GM12878 (cell line): ENCODE measurements at regions of chr10 and their contacts with region 1.

Region 1: GRCh38 chr10:62779487-62780248 is 24.9 kb upstream of the ADO start:
- DNase-seq: peak; percentile 84
- ATAC-seq: peak; percentile 96
- H3K4me3 ChIP-seq: no peak overlapping the region
- H3K27ac ChIP-seq: peak overlapping the region; percentile 75; the same call in 1 of the 2 replicates
- H3K4me1 ChIP-seq: peaks cover 23% of the 10 kb centered on the region
- H3K27me3 ChIP-seq: no peaks in the 10 kb centered on the region
- CTCF ChIP-seq: no peak
- EP300 ChIP-seq: peak; percentile 83 to 84
- POLR2A ChIP-seq: no peak
- RAD21 ChIP-seq: no peak

Region 2: DNA sequence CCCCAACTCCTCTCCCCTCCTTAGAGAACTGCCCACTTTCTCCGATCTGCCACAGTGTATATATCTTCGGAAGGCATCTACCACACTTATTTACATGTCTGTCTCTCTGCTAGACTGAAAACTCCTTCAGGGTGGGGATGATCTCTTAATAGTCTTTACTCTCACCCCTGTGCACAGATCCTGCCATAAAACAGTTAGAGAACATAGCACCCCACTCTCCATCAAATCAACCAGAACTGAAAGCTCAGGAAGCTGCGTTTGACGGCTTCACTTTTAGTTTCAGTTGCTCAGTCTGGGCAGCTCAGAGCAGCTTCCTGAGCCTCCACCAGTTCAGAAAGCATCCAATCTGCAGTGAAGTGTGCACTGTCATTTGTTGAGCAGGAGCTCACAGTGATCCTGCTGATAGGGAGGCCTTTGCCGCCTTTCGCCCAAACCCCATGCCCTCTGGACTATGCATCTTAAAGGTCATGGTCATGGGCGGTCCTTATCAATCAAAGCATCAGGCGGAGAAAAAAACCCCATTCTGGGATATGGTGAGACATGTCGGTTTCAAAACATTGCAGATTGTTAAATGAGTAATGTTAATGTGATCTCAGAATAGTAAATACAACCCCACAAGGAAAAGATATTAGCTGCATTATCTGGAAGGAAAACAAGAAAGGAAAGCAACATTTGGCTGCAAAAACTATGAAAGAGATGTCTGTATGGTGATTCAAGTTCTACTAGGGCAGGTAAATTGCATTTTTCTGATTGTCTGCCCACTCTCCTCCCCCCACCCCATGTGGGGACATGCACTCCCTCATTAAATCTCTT is 142.2 kb before region 1 on chr10:
- CTCF ChIA-PET with region 1: interaction called, 6 read pairs
- POLR2A ChIA-PET with region 1: no interaction called
- RAD21 ChIA-PET with region 1: interaction called, 23 read pairs
- SMC1A ChIA-PET with region 1: interaction called, 24 read pairs
- in situ Hi-C with region 1: no loop called
- intact Hi-C with region 1: no loop called
- DNase-seq: peak; percentile 81
- ATAC-seq: peak; percentile 79
- H3K4me3 ChIP-seq: peak overlapping the region; percentile 12
- H3K27ac ChIP-seq: peak overlapping the region; percentile 95
- H3K4me1 ChIP-seq: peaks cover 85% of the 10 kb centered on the region
- H3K27me3 ChIP-seq: no peaks in the 10 kb centered on the region
- CTCF ChIP-seq: no peak
- EP300 ChIP-seq: peak; percentile 23 to 60; a peak in 3 of 4 replicates
- POLR2A ChIP-seq: peak; percentile 61
- RAD21 ChIP-seq: no peak

Region 3: DNA sequence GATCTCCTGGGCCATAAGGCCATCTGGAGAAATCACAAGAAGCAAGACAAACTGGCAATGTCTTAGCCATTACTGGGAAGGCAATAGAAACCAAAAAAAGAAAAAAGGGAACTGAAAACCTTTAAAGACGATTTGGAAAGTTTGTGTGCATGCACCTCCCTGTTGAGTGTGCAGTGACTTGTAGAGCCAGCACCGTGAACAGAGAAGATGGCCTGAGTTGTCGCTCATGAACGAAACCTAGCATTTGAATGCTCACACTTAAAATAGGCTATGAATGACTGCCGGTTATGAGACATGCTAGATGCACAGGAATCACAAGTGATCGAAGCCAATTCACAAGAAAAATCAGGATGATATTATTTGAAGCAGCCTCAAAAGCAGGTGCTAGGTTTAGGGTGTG is 126.4 kb before region 1 on chr10:
- CTCF ChIA-PET with region 1: interaction called, 5 read pairs
- POLR2A ChIA-PET with region 1: no interaction called
- RAD21 ChIA-PET with region 1: interaction called, 19 read pairs
- SMC1A ChIA-PET with region 1: interaction called, 25 read pairs
- in situ Hi-C with region 1: no loop called
- intact Hi-C with region 1: loop called (anchors 1 kb)
- DNase-seq: peak; percentile 97
- ATAC-seq: peak; percentile 85
- H3K4me3 ChIP-seq: no peak overlapping the region
- H3K27ac ChIP-seq: peak overlapping the region; percentile 90
- H3K4me1 ChIP-seq: peaks cover 50% of the 10 kb centered on the region
- H3K27me3 ChIP-seq: no peaks in the 10 kb centered on the region
- CTCF ChIP-seq: no peak
- EP300 ChIP-seq: peak; percentile 99
- POLR2A ChIP-seq: no peak
- RAD21 ChIP-seq: peak; percentile 45; the same call in 1 of the 2 replicates

Region 4: DNA sequence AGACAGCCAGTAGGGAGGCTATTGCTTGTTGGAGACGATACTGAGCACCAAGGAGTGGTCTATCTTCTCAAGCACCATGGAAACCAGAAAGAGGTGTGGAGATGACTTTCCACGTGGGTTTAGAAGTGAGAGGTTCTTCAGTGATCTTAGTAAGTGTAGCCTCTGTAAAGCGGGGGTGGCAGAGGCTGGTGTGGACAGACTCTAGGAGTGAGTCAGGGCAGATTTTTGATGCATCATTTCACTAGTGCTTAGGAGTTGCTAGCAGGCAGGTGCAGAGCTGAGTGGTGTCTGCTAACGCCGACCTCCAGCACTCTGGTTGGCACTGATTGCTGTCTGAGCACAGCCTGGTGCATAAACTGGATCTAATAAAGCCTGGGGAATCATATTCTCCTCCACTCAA is 53.5 kb before region 1 on chr10:
- CTCF ChIA-PET with region 1: interaction called, 6 read pairs
- POLR2A ChIA-PET with region 1: interaction called, 20 read pairs
- RAD21 ChIA-PET with region 1: interaction called, 101 read pairs
- SMC1A ChIA-PET with region 1: interaction called, 124 read pairs
- in situ Hi-C with region 1: no loop called
- intact Hi-C with region 1: no loop called
- DNase-seq: no peak
- ATAC-seq: peak; percentile 97
- H3K4me3 ChIP-seq: no peak overlapping the region
- H3K27ac ChIP-seq: no peak overlapping the region
- H3K4me1 ChIP-seq: no peaks in the 10 kb centered on the region
- H3K27me3 ChIP-seq: no peaks in the 10 kb centered on the region
- CTCF ChIP-seq: no peak
- EP300 ChIP-seq: peak; percentile 63 to 69; a peak in 3 of 4 replicates
- POLR2A ChIP-seq: peak; percentile 36; the same call in 1 of the 2 replicates
- RAD21 ChIP-seq: peak; percentile 6; the same call in 1 of the 2 replicates

Region 5: DNA sequence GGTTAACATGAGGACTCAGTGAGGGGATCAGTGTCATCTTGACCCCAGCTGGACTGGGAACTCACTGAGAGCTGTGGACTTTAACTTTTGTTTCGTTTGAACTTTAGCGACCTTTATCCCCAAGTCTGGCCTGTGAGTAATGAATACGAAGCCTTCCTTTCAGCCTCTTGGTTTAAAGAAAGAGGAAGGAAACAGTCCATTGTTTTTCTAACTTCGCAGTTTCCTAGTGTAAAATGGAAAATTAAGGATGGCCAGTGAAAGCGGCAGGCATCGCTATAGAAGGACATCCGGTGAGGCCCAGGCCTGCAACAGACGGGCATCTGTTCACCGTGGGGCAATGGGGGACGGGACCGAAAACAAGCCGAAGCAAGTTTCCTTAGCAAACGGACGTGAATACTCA is 19.3 kb before region 1 on chr10:
- CTCF ChIA-PET with region 1: interaction called, 6 read pairs
- POLR2A ChIA-PET with region 1: interaction called, 10 read pairs
- RAD21 ChIA-PET with region 1: interaction called, 23 read pairs
- SMC1A ChIA-PET with region 1: interaction called, 15 read pairs
- in situ Hi-C with region 1: no loop called
- intact Hi-C with region 1: no loop called
- DNase-seq: no peak
- ATAC-seq: no peak
- H3K4me3 ChIP-seq: no peak overlapping the region
- H3K27ac ChIP-seq: no peak overlapping the region
- H3K4me1 ChIP-seq: peaks cover 10% of the 10 kb centered on the region
- H3K27me3 ChIP-seq: no peaks in the 10 kb centered on the region
- CTCF ChIP-seq: no peak
- EP300 ChIP-seq: no peak
- POLR2A ChIP-seq: no peak
- RAD21 ChIP-seq: no peak

Region 6: GRCh38 chr10:62811159-62811875 is 31.6 kb after region 1 on chr10:
- CTCF ChIA-PET with region 1: interaction called, 11 read pairs
- POLR2A ChIA-PET with region 1: interaction called, 12 read pairs
- RAD21 ChIA-PET with region 1: interaction called, 61 read pairs
- SMC1A ChIA-PET with region 1: interaction called, 54 read pairs
- in situ Hi-C with region 1: no loop called
- intact Hi-C with region 1: loop called (anchors 2 kb)
- DNase-seq: peak; percentile 85
- ATAC-seq: peak; percentile 62
- H3K4me3 ChIP-seq: peak overlapping the region; percentile 25; the same call in 1 of the 2 replicates
- H3K27ac ChIP-seq: peak overlapping the region; percentile 42; the same call in 1 of the 2 replicates
- H3K4me1 ChIP-seq: peaks cover 20% of the 10 kb centered on the region
- H3K27me3 ChIP-seq: no peaks in the 10 kb centered on the region
- CTCF ChIP-seq: no peak
- EP300 ChIP-seq: peak; percentile 80 to 86; a peak in 3 of 4 replicates
- POLR2A ChIP-seq: 0 out of 2 replicates have a peak, but pooled peaks have one; percentile 21
- RAD21 ChIP-seq: 0 out of 2 replicates have a peak, but pooled peaks have one; percentile 6

Region 7: GRCh38 chr10:63197344-63198106 is 417.9 kb after region 1 on chr10:
- CTCF ChIA-PET with region 1: no interaction called
- POLR2A ChIA-PET with region 1: no interaction called
- RAD21 ChIA-PET with region 1: no interaction called
- SMC1A ChIA-PET with region 1: no interaction called
- in situ Hi-C with region 1: no loop called
- intact Hi-C with region 1: no loop called
- DNase-seq: no peak
- ATAC-seq: no peak
- H3K4me3 ChIP-seq: no peak overlapping the region
- H3K27ac ChIP-seq: no peak overlapping the region
- H3K4me1 ChIP-seq: no peaks in the 10 kb centered on the region
- H3K27me3 ChIP-seq: no peaks in the 10 kb centered on the region
- CTCF ChIP-seq: no peak
- EP300 ChIP-seq: no peak
- POLR2A ChIP-seq: no peak
- RAD21 ChIP-seq: no peak